ENCODE measurements at regions of chr12 and their contacts with region 1.

Region 1: GRCh38 chr12:19994970-19995369 is 373.4 kb upstream of the PDE3A start:
- DNase-seq: no peak
- ATAC-seq: no peak
- H3K4me3 ChIP-seq: no peak overlapping the region
- H3K27ac ChIP-seq: no peak overlapping the region
- H3K4me1 ChIP-seq: no peaks in the 10 kb centered on the region
- H3K27me3 ChIP-seq: no peaks in the 10 kb centered on the region
- CTCF ChIP-seq: peak in 2 of 3 experiments; percentile 10 to 35; a peak in 3 of 6 replicates
- POLR2A ChIP-seq: no peak
- RAD21 ChIP-seq: peak; percentile 19; the same call in 1 of the 2 replicates

Region 2: DNA sequence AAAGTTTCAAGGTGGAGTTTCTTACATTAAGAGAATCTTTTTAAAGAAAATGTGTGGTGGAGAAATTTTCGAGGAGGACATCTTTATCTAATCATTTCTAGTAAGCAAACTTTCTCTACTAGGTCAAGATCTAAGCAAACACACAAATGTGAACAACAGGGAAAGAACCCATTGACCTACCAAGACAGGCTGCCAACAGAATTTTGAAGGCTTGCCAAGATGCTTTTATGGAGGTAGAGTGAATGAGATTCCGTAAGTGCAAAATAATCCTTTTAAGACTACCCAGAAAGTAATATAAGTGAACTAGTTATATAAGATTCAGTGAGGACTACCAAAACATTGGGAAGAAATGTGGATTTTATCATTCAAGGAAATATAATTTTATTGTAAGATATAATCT is 16.2 kb after region 1 on chr12:
- CTCF ChIA-PET with region 1: no interaction called
- POLR2A ChIA-PET with region 1: no interaction called
- RAD21 ChIA-PET with region 1: no interaction called
- intact Hi-C with region 1: no loop called
- DNase-seq: no peak
- ATAC-seq: no peak
- H3K4me3 ChIP-seq: no peak overlapping the region
- H3K27ac ChIP-seq: no peak overlapping the region
- H3K4me1 ChIP-seq: no peaks in the 10 kb centered on the region
- H3K27me3 ChIP-seq: no peaks in the 10 kb centered on the region
- CTCF ChIP-seq: no peak
- POLR2A ChIP-seq: no peak
- RAD21 ChIP-seq: no peak

Region 3: GRCh38 chr12:20369305-20370005 is 374.5 kb after region 1 on chr12:
- CTCF ChIA-PET with region 1: no interaction called
- POLR2A ChIA-PET with region 1: no interaction called
- RAD21 ChIA-PET with region 1: no interaction called
- intact Hi-C with region 1: loop called (anchors 10 kb)
- DNase-seq: no peak
- ATAC-seq: peak; percentile 64
- H3K4me3 ChIP-seq: peak overlapping the region; percentile 54 to 62
- H3K27ac ChIP-seq: no peak overlapping the region; the same call in 1 of the 2 replicates
- H3K4me1 ChIP-seq: no peaks in the 10 kb centered on the region; a peak in 1 of 4 replicates
- H3K27me3 ChIP-seq: 0 out of 2 replicates have a peak, but pooled peaks cover 4% of the 10 kb centered on the region
- CTCF ChIP-seq: no peak
- POLR2A ChIP-seq: no peak
- RAD21 ChIP-seq: no peak

Measured in HCT116 (cell line).